ENCODE measurements at regions of chr19 and their contacts with region 1.

Region 1: DNA sequence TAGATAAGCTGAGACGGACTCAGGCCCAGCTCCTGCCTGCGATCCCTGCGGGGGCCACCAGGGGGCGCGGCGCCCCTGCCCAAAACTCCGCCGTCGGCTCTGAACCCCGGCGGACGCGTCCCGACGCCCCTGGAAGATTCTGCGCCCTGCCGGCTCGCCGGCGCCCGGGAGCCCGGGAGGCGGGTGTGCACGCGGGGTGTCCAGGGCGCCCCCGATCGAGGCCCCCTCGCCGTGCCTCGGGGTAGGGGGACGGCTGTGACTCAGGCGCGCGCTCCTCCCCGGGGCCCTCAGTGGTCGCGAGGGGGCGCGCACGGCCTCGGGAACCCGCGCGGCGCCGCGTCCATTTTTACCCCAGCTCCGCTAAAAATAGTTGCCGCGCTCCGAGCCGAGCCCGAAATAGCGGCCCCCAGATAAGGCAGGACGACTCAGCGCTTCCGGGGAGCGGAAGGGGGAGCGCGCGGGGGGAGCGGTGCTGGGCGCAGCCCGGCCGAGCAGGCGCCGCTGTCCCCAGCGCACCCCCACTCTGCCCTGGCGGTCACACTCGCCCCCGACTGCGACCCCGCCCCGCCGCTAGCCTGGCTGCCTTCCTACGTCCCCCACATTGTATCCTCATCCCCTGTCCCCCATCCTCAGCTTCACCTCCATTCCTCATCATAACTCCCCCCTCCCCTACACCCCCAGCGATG is 16.0 kb upstream of the ERCC1 start:
- DNase-seq: no peak
- ATAC-seq: peak; percentile 81
- H3K4me3 ChIP-seq: peak overlapping the region; percentile 57
- H3K27ac ChIP-seq: peak overlapping the region; percentile 82
- H3K4me1 ChIP-seq: peaks cover 18% of the 10 kb centered on the region
- H3K27me3 ChIP-seq: no peaks in the 10 kb centered on the region
- CTCF ChIP-seq: peak; percentile 67 to 95 (median 94)
- EP300 ChIP-seq: no peak
- POLR2A ChIP-seq: peak; percentile 59; the same call in 1 of the 2 replicates
- RAD21 ChIP-seq: peak; percentile 77

Region 2: DNA sequence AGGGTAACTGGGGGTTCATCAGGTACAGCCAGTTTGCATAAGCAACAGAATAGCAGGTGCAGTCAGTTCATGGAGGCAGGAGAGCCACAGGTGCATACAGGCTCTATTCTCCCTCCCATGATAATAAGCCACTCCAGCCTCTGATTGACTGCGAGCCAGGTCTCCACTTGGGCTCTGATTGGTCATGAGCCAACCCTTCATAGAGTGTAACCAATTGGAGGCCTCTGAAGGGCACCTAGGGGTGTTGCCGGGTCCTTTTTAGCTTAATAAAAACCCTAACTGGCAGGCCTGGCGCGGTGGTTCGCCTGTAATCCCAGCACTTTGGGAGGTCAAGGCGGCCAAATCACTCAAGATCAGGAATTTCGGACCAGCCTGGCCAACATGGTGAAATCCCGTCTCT is 108.3 kb before region 1 on chr19:
- CTCF ChIA-PET with region 1: no interaction called
- POLR2A ChIA-PET with region 1: no interaction called
- RAD21 ChIA-PET with region 1: no interaction called
- SMC1A ChIA-PET with region 1: no interaction called
- in situ Hi-C with region 1: no loop called
- intact Hi-C with region 1: no loop called
- DNase-seq: no peak
- ATAC-seq: peak; percentile 34
- H3K4me3 ChIP-seq: no peak overlapping the region
- H3K27ac ChIP-seq: no peak overlapping the region
- H3K4me1 ChIP-seq: no peaks in the 10 kb centered on the region
- H3K27me3 ChIP-seq: no peaks in the 10 kb centered on the region
- CTCF ChIP-seq: no peak
- EP300 ChIP-seq: no peak
- POLR2A ChIP-seq: no peak
- RAD21 ChIP-seq: no peak

Region 3: GRCh38 chr19:45423589-45424190 is 16.0 kb before region 1 on chr19 and contains the start of gene ERCC1:
- CTCF ChIA-PET with region 1: interaction called, 54 read pairs
- POLR2A ChIA-PET with region 1: interaction called, 6 read pairs
- RAD21 ChIA-PET with region 1: interaction called, 11 read pairs
- SMC1A ChIA-PET with region 1: interaction called, 9 read pairs
- in situ Hi-C with region 1: no loop called
- intact Hi-C with region 1: loop called (anchors 1 kb)
- DNase-seq: peak; percentile 89
- ATAC-seq: peak; percentile 83
- H3K4me3 ChIP-seq: peak within 1 kb of the TSS; percentile 82
- H3K27ac ChIP-seq: peak within 1 kb of the TSS; percentile 91
- H3K4me1 ChIP-seq: peaks cover 35% of the 10 kb centered on the region
- H3K27me3 ChIP-seq: no peaks in the 10 kb centered on the region
- CTCF ChIP-seq: no peak
- EP300 ChIP-seq: no peak
- POLR2A ChIP-seq: peak; percentile 93
- RAD21 ChIP-seq: no peak
- polyA plus RNA-seq, gene ERCC1: 14.7 to 36.8 TPM

Region 4: GRCh38 chr19:45469132-45469944 is 29.6 kb after region 1 on chr19:
- CTCF ChIA-PET with region 1: interaction called, 385 read pairs
- POLR2A ChIA-PET with region 1: interaction called, 9 read pairs
- RAD21 ChIA-PET with region 1: interaction called, 64 read pairs
- SMC1A ChIA-PET with region 1: interaction called, 52 read pairs
- in situ Hi-C with region 1: no loop called
- intact Hi-C with region 1: no loop called
- DNase-seq: peak; percentile 78
- ATAC-seq: peak; percentile 87
- H3K4me3 ChIP-seq: peak overlapping the region; percentile 82
- H3K27ac ChIP-seq: peak overlapping the region; percentile 91
- H3K4me1 ChIP-seq: peaks cover 14% of the 10 kb centered on the region
- H3K27me3 ChIP-seq: peaks cover 0 to 2% of the 10 kb centered on the region in 2 experiments; a peak in 2 of 4 replicates
- CTCF ChIP-seq: no peak
- EP300 ChIP-seq: peak in 1 of 2 experiments; percentile 11; a peak in 1 of 4 replicates
- POLR2A ChIP-seq: peak; percentile 79
- RAD21 ChIP-seq: no peak

Region 5: GRCh38 chr19:45485305-45486077 is 45.8 kb after region 1 on chr19:
- CTCF ChIA-PET with region 1: interaction called, 385 read pairs
- POLR2A ChIA-PET with region 1: interaction called, 17 read pairs
- RAD21 ChIA-PET with region 1: interaction called, 206 read pairs
- SMC1A ChIA-PET with region 1: interaction called, 145 read pairs
- in situ Hi-C with region 1: no loop called
- intact Hi-C with region 1: no loop called
- DNase-seq: peak; percentile 71
- ATAC-seq: peak; percentile 99
- H3K4me3 ChIP-seq: peak overlapping the region; percentile 74
- H3K27ac ChIP-seq: 0 out of 2 replicates have a peak overlapping the region, but pooled peaks have one; percentile 40
- H3K4me1 ChIP-seq: 0 out of 2 replicates have a peak, but pooled peaks cover 3% of the 10 kb centered on the region
- H3K27me3 ChIP-seq: no peaks in the 10 kb centered on the region
- CTCF ChIP-seq: peak; percentile 91 to 98 (median 96)
- EP300 ChIP-seq: no peak
- POLR2A ChIP-seq: no peak
- RAD21 ChIP-seq: peak; percentile 60

Measured in GM12878 (cell line).